CD8-positive, alpha-beta T cell (primary cell): ENCODE measurements at regions of chr17 and their contacts with region 1.

Region 1: DNA sequence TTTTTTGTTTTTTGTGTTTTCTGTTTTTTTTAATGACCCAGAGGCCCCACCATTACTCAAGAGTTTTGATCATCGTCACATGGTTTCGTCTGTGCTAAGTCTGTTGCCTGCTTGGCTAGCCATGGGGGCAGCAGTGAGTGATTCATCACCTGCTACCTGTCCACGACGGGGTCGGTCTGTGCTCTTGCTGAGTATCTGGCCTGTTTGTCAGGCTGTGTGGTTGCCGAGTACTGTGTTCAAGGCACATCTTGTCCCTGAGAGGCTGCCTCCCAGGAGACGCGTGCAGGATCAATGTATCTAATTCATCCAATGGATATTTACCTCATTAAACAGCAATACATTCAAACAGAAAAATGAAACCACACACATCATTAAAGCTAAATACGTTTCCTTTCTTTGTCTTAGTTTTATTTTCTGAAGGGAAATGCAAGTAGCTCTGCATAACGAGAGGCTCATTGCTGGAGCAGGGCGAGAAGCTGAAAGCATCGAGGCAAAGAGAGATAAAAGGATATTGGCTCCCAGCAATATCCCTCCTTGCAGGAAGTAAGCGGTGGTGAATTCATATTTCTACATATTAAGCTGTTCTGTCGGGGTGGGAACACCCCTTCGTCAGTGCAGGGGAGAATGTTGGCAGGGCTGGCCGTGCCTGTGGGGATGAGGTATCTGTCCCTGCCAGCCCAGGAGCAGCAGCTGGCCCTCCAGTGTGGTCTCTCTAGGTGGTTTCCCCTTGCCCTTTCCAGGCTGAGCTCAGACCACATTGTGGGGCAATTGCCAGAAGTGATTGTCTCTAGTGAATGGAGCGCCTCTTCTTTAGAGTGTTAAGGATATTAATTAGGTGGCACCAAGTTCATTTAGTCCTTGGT is 166.2 kb upstream of the ASIC2 start:
- DNase-seq: no peak
- ATAC-seq: no peak
- H3K4me3 ChIP-seq: no peak overlapping the region
- H3K4me3 Mint-ChIP-seq: no peak overlapping the region
- H3K27ac ChIP-seq: no peak overlapping the region
- H3K27ac Mint-ChIP-seq: no peak overlapping the region
- H3K4me1 ChIP-seq: no peaks in the 10 kb centered on the region
- H3K4me1 Mint-ChIP-seq: no peaks in the 10 kb centered on the region
- H3K27me3 ChIP-seq: no peaks in the 10 kb centered on the region
- H3K27me3 Mint-ChIP-seq: peaks cover 17% of the 10 kb centered on the region
- CTCF ChIP-seq: no peak

Region 2: DNA sequence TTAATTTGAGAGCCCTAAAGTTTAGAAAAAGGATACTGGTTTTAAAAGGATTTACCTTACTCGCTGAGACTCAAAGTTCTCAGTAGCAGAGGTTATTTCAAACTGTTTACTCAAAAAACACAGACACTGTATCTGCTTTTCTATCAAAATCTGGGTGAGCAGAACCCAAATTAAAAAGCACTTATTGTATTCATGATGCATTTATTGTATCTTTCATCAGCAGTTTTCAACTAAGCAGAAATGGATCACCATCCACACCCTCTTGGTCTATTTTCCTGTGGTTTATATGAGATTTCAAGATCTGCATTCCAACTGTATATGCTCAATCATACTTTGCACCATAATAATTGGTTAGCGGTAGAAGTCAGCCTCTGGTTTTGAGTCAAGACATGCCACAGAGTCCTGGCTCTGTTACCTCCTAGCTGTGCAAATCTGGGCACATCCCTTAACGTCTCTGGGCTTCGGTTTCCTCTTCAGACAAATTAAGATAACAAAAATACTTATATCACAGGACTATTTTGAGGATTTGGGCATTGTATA is 275.8 kb before region 1 on chr17:
- CTCF ChIA-PET with region 1: no interaction called
- POLR2A ChIA-PET with region 1: no interaction called
- intact Hi-C with region 1: loop called in 1 of 2 experiments (anchors 10 kb)
- DNase-seq: no peak
- ATAC-seq: no peak
- H3K4me3 ChIP-seq: no peak overlapping the region
- H3K4me3 Mint-ChIP-seq: no peak overlapping the region
- H3K27ac ChIP-seq: no peak overlapping the region
- H3K27ac Mint-ChIP-seq: no peak overlapping the region
- H3K4me1 ChIP-seq: no peaks in the 10 kb centered on the region
- H3K4me1 Mint-ChIP-seq: no peaks in the 10 kb centered on the region
- H3K27me3 ChIP-seq: no peaks in the 10 kb centered on the region
- H3K27me3 Mint-ChIP-seq: peaks cover 23% of the 10 kb centered on the region
- CTCF ChIP-seq: no peak

Region 3: GRCh38 chr17:33389504-33390135 is 69.7 kb before region 1 on chr17:
- CTCF ChIA-PET with region 1: no interaction called
- POLR2A ChIA-PET with region 1: no interaction called
- intact Hi-C with region 1: loop called in 1 of 2 experiments (anchors 10 kb)
- DNase-seq: no peak
- ATAC-seq: no peak
- H3K4me3 ChIP-seq: no peak overlapping the region
- H3K4me3 Mint-ChIP-seq: no peak overlapping the region
- H3K27ac ChIP-seq: no peak overlapping the region
- H3K27ac Mint-ChIP-seq: no peak overlapping the region
- H3K4me1 ChIP-seq: no peaks in the 10 kb centered on the region
- H3K4me1 Mint-ChIP-seq: no peaks in the 10 kb centered on the region
- H3K27me3 ChIP-seq: no peaks in the 10 kb centered on the region
- H3K27me3 Mint-ChIP-seq: peaks cover 21% of the 10 kb centered on the region
- CTCF ChIP-seq: no peak